ENCODE measurements at regions of chr9 and their contacts with region 1.

Region 1: GRCh38 chr9:137223078-137223970 is 1.3 kb upstream of the RNF208 start:
- DNase-seq: peak; percentile 93 to 99 (median 99)
- ATAC-seq: peak; percentile 97
- H3K4me3 ChIP-seq: peak overlapping the region; percentile 86
- H3K4me3 Mint-ChIP-seq: peak overlapping the region; percentile 78 to 88 (median 82)
- H3K27ac ChIP-seq: peak overlapping the region; percentile 91
- H3K27ac Mint-ChIP-seq: peak overlapping the region in 7 of 9 donors; percentile 21 to 92 (median 75)
- H3K4me1 ChIP-seq: peaks cover 9 to 11% of the 10 kb centered on the region in 2 donors
- H3K4me1 Mint-ChIP-seq: peaks cover 5 to 15% (median 6%) of the 10 kb centered on the region in 7 donors
- H3K27me3 ChIP-seq: no peaks in the 10 kb centered on the region
- H3K27me3 Mint-ChIP-seq: peaks cover 0 to 6% (median 4%) of the 10 kb centered on the region in 5 donors

Region 2: GRCh38 chr9:136885950-136886578 is 337.3 kb before region 1 on chr9 and contains the start of gene TRAF2:
- CTCF ChIA-PET with region 1: no interaction called
- POLR2A ChIA-PET with region 1: no interaction called
- intact Hi-C with region 1: loop called in 1 of 2 experiments (anchors 1 kb)
- DNase-seq: peak; percentile 93 to 98 (median 96)
- ATAC-seq: peak; percentile 95
- H3K4me3 ChIP-seq: peak within 1 kb of the TSS; percentile 76
- H3K4me3 Mint-ChIP-seq: peak within 1 kb of the TSS; percentile 83 to 99 (median 86)
- H3K27ac ChIP-seq: peak within 1 kb of the TSS; percentile 97
- H3K27ac Mint-ChIP-seq: peak within 1 kb of the TSS; percentile 78 to 95 (median 89)
- H3K4me1 ChIP-seq: peaks cover 26 to 29% of the 10 kb centered on the region in 2 donors
- H3K4me1 Mint-ChIP-seq: peaks cover 17 to 53% (median 37%) of the 10 kb centered on the region in 7 donors
- H3K27me3 ChIP-seq: no peaks in the 10 kb centered on the region
- H3K27me3 Mint-ChIP-seq: no peaks in the 10 kb centered on the region
- total RNA-seq, gene TRAF2: 14.6 to 72.8 (median 29.6) TPM

Region 3: GRCh38 chr9:137070201-137070905 is 153.0 kb before region 1 on chr9 and contains the start of gene SAPCD2:
- CTCF ChIA-PET with region 1: no interaction called
- POLR2A ChIA-PET with region 1: interaction called, 3 read pairs
- intact Hi-C with region 1: loop called in 1 of 2 experiments (anchors 1 kb)
- DNase-seq: peak; percentile 72 to 88 (median 85)
- ATAC-seq: peak; percentile 94
- H3K4me3 ChIP-seq: peak within 1 kb of the TSS; percentile 27
- H3K4me3 Mint-ChIP-seq: peak within 1 kb of the TSS; percentile 66 to 92 (median 81)
- H3K27ac ChIP-seq: peak within 1 kb of the TSS; percentile 51
- H3K27ac Mint-ChIP-seq: peak within 1 kb of the TSS in 6 of 9 donors; percentile 40 to 86 (median 62)
- H3K4me1 ChIP-seq: peaks cover 11 to 15% of the 10 kb centered on the region in 2 donors
- H3K4me1 Mint-ChIP-seq: peaks cover 10 to 38% (median 12%) of the 10 kb centered on the region in 7 donors
- H3K27me3 ChIP-seq: no peaks in the 10 kb centered on the region
- H3K27me3 Mint-ChIP-seq: no peaks in the 10 kb centered on the region
- total RNA-seq, gene SAPCD2: 0.16 to 22.1 (median 0.74) TPM

Region 4: GRCh38 chr9:137114610-137115391 is 108.5 kb before region 1 on chr9 and contains the start of gene DPP7:
- CTCF ChIA-PET with region 1: interaction called, 4 read pairs
- POLR2A ChIA-PET with region 1: interaction called, 5 read pairs
- intact Hi-C with region 1: loop called (anchors 1 kb)
- DNase-seq: peak; percentile 63 to 88 (median 80)
- ATAC-seq: peak; percentile 93
- H3K4me3 ChIP-seq: peak within 1 kb of the TSS; percentile 54
- H3K4me3 Mint-ChIP-seq: peak within 1 kb of the TSS; percentile 38 to 82 (median 69)
- H3K27ac ChIP-seq: peak within 1 kb of the TSS; percentile 81
- H3K27ac Mint-ChIP-seq: peak within 1 kb of the TSS in 4 of 9 donors; percentile 24 to 78 (median 40)
- H3K4me1 ChIP-seq: peaks cover 0 to 4% of the 10 kb centered on the region in 2 donors
- H3K4me1 Mint-ChIP-seq: peaks cover 0 to 13% (median 6%) of the 10 kb centered on the region in 7 donors
- H3K27me3 ChIP-seq: no peaks in the 10 kb centered on the region
- H3K27me3 Mint-ChIP-seq: no peaks in the 10 kb centered on the region
- total RNA-seq, gene DPP7: 235 to 328 (median 298) TPM

Region 5: GRCh38 chr9:137176302-137177182 is 46.8 kb before region 1 on chr9:
- CTCF ChIA-PET with region 1: interaction called, 9 read pairs
- POLR2A ChIA-PET with region 1: interaction called, 3 read pairs
- intact Hi-C with region 1: loop called in 1 of 2 experiments (anchors 1 kb)
- DNase-seq: peak in 1 of 9 donors; percentile 40
- ATAC-seq: peak; percentile 63
- H3K4me3 ChIP-seq: no peak overlapping the region
- H3K4me3 Mint-ChIP-seq: no peak overlapping the region
- H3K27ac ChIP-seq: no peak overlapping the region
- H3K27ac Mint-ChIP-seq: peak overlapping the region in 2 of 9 donors; percentile 33 to 65
- H3K4me1 ChIP-seq: no peaks in the 10 kb centered on the region
- H3K4me1 Mint-ChIP-seq: peaks cover 0 to 16% (median 5%) of the 10 kb centered on the region in 7 donors
- H3K27me3 ChIP-seq: no peaks in the 10 kb centered on the region
- H3K27me3 Mint-ChIP-seq: peaks cover 0 to 15% (median under 1%) of the 10 kb centered on the region in 5 donors

Region 6: DNA sequence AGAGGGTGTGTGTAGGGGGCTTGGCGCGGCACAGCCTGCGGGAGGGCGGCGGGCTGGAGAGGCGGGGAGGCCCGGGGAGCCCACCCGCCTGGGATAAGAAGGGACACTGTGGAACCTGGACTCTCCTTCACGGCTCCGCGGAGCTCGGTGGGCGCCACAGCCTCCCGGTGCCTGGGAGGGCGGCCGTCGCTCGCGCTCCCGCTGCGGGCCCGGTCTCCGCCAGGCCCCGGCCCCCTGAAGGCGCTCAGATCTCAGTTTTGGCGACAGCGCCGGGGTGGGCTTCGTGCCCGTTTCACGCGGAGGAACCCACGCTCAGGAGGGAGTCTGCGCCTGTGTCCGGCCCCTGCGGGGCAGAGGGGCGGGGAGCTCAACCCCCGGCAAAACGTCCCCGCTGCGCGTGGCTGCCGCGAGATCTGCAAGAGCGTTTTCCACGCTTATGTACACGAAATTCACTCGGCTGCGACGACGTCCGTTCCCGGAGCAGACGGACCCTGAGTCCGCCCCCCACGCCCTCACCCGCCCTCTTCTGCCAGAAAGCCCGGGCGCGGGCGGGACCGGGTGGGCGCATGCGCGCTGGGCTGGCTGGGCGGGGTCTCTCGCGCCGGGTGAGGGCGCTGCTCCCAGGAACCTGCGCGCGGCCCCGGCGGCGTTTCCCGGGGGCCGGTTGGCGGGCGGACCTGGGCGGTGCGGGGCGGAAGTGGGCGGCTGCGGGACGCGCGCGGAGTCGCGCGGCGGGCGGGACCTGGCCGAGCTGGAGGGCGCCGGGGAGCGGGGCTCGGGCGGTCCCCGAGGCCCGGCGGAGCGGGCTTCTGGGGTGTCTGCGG is 31.5 kb after region 1 on chr9 and contains the start of gene NELFB:
- CTCF ChIA-PET with region 1: no interaction called
- POLR2A ChIA-PET with region 1: interaction called, 4 read pairs
- intact Hi-C with region 1: loop called (anchors 1 kb)
- DNase-seq: peak; percentile 89 to 100 (median 95)
- ATAC-seq: peak; percentile 97
- H3K4me3 ChIP-seq: peak within 1 kb of the TSS; percentile 91
- H3K4me3 Mint-ChIP-seq: peak within 1 kb of the TSS; percentile 79 to 94 (median 88)
- H3K27ac ChIP-seq: peak within 1 kb of the TSS; percentile 70
- H3K27ac Mint-ChIP-seq: peak within 1 kb of the TSS in 7 of 9 donors; percentile 65 to 91 (median 82)
- H3K4me1 ChIP-seq: peaks cover 11% of the 10 kb centered on the region in 2 donors
- H3K4me1 Mint-ChIP-seq: peaks cover 0 to 22% (median 17%) of the 10 kb centered on the region in 7 donors
- H3K27me3 ChIP-seq: no peaks in the 10 kb centered on the region
- H3K27me3 Mint-ChIP-seq: no peaks in the 10 kb centered on the region
- total RNA-seq, gene NELFB: 33.4 to 64.2 (median 38.9) TPM